ENCODE measurements at regions of chr12 and their contacts with region 1.

Region 1: GRCh38 chr12:50924439-50925341 is 27.7 kb upstream of the HIGD1C start:
- DNase-seq: peak; percentile 93
- ATAC-seq: peak; percentile 95 to 97

Region 2: DNA sequence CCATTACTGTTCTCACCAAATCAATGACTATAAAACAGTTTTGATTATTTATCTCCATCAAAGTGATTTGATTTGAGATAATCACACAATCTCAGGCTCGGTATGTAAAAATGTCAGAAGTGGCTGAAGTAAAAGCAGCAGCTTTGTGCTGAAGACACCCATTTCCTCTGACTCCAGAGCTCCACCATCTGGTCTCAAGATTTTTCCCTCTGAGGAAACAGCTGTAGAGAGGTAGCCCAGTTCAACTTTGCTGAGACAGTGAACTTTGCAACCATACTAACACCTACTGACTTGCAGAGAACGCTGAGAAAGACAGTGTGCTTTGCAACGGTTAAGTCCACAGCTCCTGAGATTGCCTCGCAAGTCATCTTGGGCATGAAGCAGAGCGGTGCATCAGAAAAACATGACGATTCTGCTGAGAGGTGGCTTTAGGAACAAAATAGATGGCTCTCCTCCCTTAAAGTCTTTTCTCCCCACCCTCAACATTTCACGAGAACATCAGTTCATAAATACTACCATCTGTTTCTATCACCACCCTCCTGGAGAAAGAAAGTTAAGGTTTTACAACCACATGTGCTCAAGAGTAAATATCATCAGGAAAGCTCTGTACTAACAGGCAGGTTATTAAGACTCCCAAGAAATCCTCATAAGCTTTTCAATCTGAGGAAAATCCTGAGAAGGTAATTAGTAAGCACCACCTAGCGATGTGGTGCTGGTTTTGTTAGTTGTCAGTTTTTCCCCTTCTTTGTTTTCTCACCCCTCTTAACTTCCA is 62.5 kb after region 1 on chr12:
- intact Hi-C with region 1: loop called in 1 of 2 experiments (anchors 2 kb)
- DNase-seq: no peak
- ATAC-seq: peak; percentile 65 to 76